ENCODE measurements at regions of chr5 and their contacts with region 1.

Region 1: DNA sequence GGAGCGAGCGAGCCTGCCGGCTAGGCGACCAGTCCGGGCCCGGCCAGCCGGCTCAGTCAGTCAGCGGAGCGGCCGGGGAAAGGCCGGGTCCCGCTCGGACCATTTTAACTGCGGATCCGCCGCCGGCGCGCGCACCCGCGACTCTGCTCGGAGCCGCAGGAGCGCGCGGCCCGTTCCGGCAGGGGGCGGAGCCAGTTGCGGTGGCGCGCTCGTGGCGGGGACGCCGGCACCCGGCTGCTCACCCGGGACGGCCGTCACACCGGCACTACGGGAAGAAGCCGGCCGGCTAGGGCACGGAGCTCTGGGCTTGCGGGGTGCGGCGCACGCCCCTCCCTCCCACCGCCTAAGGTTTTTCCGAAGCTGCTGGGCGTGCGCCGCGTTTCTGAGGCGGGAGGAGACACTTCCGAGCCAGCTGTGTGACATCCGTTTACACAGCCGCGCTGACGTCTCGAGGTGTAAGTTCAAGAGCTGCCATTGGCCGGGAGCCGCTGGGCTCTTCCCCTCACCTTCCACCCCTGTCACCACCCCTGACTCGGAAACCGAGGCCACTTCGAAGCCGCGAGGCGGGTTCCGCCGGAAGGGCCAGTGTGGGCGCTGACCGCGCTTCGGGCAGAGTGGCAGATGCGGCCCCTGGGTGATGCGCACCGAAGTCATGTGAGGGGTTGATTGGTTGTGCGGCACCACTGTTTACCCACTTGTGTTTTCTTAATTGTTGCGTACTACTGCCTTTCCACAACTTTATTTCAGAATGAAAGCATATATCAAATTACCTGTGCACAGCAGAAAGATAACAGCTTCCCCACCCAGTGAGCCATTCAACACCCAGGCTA is at the start of gene FBXL17:
- DNase-seq: peak; percentile 93 to 96
- ATAC-seq: peak; percentile 86 to 92
- H3K4me3 ChIP-seq: peak within 1 kb of the TSS; percentile 77 to 97 (median 94)
- H3K27ac ChIP-seq: peak within 1 kb of the TSS; percentile 96 to 100 (median 99)
- H3K4me1 ChIP-seq: peaks cover 37 to 38% of the 10 kb centered on the region in 2 donors
- H3K27me3 ChIP-seq: no peaks in the 10 kb centered on the region
- CTCF ChIP-seq: peak in 1 of 5 experiments; percentile 41
- POLR2A ChIP-seq: peak; percentile 91
- total RNA-seq, gene FBXL17: 23.3 to 33.4 (median 26.9) TPM

Region 2: GRCh38 chr5:108266235-108266634 is 115.9 kb before region 1 on chr5:
- in situ Hi-C with region 1: no loop called
- intact Hi-C with region 1: no loop called
- DNase-seq: peak in 1 of 2 donors; percentile 33
- ATAC-seq: peak; percentile 92 to 100
- H3K4me3 ChIP-seq: no peak overlapping the region
- H3K27ac ChIP-seq: peak overlapping the region in 1 of 4 donors; percentile 21
- H3K4me1 ChIP-seq: peaks cover 4 to 8% of the 10 kb centered on the region in 2 donors
- H3K27me3 ChIP-seq: no peaks in the 10 kb centered on the region
- CTCF ChIP-seq: no peak
- POLR2A ChIP-seq: no peak

Region 3: GRCh38 chr5:108769352-108769751 is 387.2 kb after region 1 on chr5:
- in situ Hi-C with region 1: loop called in 1 of 4 experiments (anchors 25 kb)
- intact Hi-C with region 1: no loop called
- DNase-seq: no peak
- ATAC-seq: no peak
- H3K4me3 ChIP-seq: no peak overlapping the region
- H3K27ac ChIP-seq: no peak overlapping the region
- H3K4me1 ChIP-seq: peaks cover 10 to 12% of the 10 kb centered on the region in 2 donors
- H3K27me3 ChIP-seq: no peaks in the 10 kb centered on the region
- CTCF ChIP-seq: no peak
- POLR2A ChIP-seq: no peak

Measured in gastrocnemius medialis (tissue), 4 donors.